Ovary (tissue), 10 donors: ENCODE measurements at regions of chr5 and their contacts with region 1.

Region 1: DNA sequence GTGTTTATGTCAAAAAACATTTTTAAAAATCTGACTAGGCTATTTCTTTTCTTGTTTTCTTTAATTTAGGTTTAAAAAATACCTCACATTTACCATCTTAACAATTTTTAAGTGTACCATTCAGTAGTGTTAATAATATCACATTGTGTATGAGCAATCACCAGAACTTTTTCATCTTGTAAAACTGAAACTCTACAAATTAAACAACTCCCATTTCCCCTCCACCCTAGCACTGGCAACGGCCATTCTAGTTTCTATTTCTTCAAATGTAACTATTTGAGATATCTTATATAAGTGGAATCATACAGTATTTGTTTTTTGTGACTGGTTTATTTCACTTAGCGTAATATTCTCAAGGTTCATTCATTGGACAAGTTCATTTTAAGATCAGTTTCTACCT is 27.7 kb downstream of the PLCXD3 start:
- DNase-seq: no peak
- H3K4me3 ChIP-seq: no peak overlapping the region
- H3K27ac ChIP-seq: no peak overlapping the region
- H3K4me1 ChIP-seq: peaks cover 2% of the 10 kb centered on the region
- H3K27me3 ChIP-seq: no peaks in the 10 kb centered on the region
- CTCF ChIP-seq: no peak
- EP300 ChIP-seq: no peak
- POLR2A ChIP-seq: no peak

Region 2: GRCh38 chr5:40356248-40356647 is 1126.5 kb before region 1 on chr5:
- intact Hi-C with region 1: loop called in 1 of 4 experiments (anchors 10 kb)
- DNase-seq: no peak
- H3K4me3 ChIP-seq: no peak overlapping the region
- H3K27ac ChIP-seq: no peak overlapping the region
- H3K4me1 ChIP-seq: no peaks in the 10 kb centered on the region
- H3K27me3 ChIP-seq: no peaks in the 10 kb centered on the region
- CTCF ChIP-seq: no peak
- EP300 ChIP-seq: no peak
- POLR2A ChIP-seq: no peak